GM12878 (cell line): ENCODE measurements at regions of chr3 and their contacts with region 1.

Region 1: DNA sequence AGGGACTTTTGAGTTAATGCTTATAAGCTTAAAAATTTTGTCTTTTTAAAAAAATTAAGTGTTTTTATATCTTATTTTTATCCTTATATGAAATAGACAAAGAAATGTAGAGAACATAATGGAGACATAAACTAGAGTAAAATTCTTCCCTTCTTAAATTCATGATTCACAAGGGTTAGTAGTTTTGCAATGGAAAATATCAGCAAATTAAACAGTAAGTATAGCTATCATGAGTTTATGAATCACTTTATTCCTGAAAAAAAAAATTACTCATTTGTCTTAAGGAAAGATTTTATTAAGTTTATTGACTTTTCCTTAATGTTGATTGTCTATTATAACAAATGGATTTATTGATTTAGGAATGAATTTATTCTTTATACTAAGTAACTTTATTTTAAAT is 4.3 kb downstream of the ATP6V1A start:
- DNase-seq: no peak
- ATAC-seq: no peak
- H3K4me3 ChIP-seq: no peak overlapping the region
- H3K27ac ChIP-seq: no peak overlapping the region
- H3K4me1 ChIP-seq: peaks cover 10% of the 10 kb centered on the region; the same call in 1 of the 2 replicates
- H3K27me3 ChIP-seq: no peaks in the 10 kb centered on the region
- CTCF ChIP-seq: no peak
- EP300 ChIP-seq: no peak
- POLR2A ChIP-seq: no peak
- RAD21 ChIP-seq: no peak

Region 2: DNA sequence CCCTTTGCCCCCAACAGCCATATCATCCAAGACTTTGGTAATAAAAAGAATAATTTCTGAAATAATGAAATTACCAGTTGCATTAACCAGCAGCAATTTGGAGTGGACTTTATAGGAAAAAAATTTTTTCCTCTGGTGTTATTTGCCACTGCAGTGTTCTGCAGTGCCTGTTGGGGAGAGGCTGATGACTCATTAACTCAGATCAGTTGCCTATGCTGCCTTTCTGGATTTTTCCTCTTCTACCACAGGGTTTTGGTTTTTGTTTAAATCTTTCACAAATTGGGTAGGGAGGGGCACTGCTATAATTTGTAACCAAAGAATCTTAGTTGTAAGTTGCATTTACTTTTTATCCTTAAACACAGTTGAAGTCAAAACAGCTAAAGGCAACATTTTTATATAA is 18.4 kb after region 1 on chr3:
- CTCF ChIA-PET with region 1: interaction called, 10 read pairs
- POLR2A ChIA-PET with region 1: interaction called, 4 read pairs
- RAD21 ChIA-PET with region 1: interaction called, 5 read pairs
- SMC1A ChIA-PET with region 1: interaction called, 8 read pairs
- in situ Hi-C with region 1: no loop called
- intact Hi-C with region 1: no loop called
- DNase-seq: no peak
- ATAC-seq: peak; percentile 74
- H3K4me3 ChIP-seq: no peak overlapping the region
- H3K27ac ChIP-seq: no peak overlapping the region
- H3K4me1 ChIP-seq: no peaks in the 10 kb centered on the region
- H3K27me3 ChIP-seq: no peaks in the 10 kb centered on the region
- CTCF ChIP-seq: no peak
- EP300 ChIP-seq: no peak
- POLR2A ChIP-seq: no peak
- RAD21 ChIP-seq: no peak

Region 3: GRCh38 chr3:113838631-113839209 is 87.6 kb after region 1 on chr3 and contains the start of gene GRAMD1C:
- CTCF ChIA-PET with region 1: interaction called, 17 read pairs
- POLR2A ChIA-PET with region 1: interaction called, 12 read pairs
- RAD21 ChIA-PET with region 1: interaction called, 9 read pairs
- SMC1A ChIA-PET with region 1: interaction called, 6 read pairs
- in situ Hi-C with region 1: no loop called
- intact Hi-C with region 1: loop called (anchors 2 kb)
- DNase-seq: peak; percentile 59
- ATAC-seq: peak; percentile 98
- H3K4me3 ChIP-seq: peak within 1 kb of the TSS; percentile 54
- H3K27ac ChIP-seq: no peak within 1 kb of the TSS
- H3K4me1 ChIP-seq: peaks cover 3% of the 10 kb centered on the region; the same call in 1 of the 2 replicates
- H3K27me3 ChIP-seq: no peaks in the 10 kb centered on the region
- CTCF ChIP-seq: peak; percentile 86 to 89 (median 88)
- EP300 ChIP-seq: no peak
- POLR2A ChIP-seq: peak; percentile 40; the same call in 1 of the 2 replicates
- RAD21 ChIP-seq: peak; percentile 75
- polyA plus RNA-seq, gene GRAMD1C: 3.2 to 8.4 TPM

Region 4: DNA sequence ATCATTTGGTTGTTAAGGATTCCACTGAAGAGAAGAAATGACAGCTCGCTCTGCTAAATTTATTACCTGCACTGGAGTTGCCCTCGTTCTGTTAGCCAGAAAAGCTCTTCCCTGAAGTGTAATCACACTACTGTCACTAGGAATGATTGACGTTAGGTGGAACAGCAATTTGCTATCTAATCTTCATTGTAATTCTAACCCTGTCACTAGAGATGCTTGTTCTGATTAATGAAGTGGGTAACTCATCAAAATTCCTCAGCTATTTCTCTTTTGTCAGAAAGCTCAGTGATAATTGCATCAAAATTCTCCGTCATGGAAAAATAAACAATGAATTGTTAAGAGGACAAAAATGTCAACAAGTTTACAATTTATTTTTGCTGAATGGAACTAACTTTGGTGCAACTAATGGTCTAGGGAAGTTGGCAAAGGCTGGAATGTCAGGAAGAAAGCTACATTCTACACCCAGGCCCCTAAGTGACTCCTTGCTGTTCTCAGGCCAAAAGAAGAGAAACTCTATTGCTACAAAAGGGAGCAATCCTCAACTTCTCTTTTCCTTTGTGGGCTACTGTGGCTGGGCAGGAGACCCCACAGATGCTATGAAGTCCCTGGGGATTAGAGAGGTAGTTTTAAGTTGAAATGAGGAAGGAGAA is 271.1 kb after region 1 on chr3:
- CTCF ChIA-PET with region 1: no interaction called
- POLR2A ChIA-PET with region 1: no interaction called
- RAD21 ChIA-PET with region 1: no interaction called
- SMC1A ChIA-PET with region 1: no interaction called
- in situ Hi-C with region 1: no loop called
- intact Hi-C with region 1: no loop called
- DNase-seq: no peak
- ATAC-seq: no peak
- H3K4me3 ChIP-seq: no peak overlapping the region
- H3K27ac ChIP-seq: no peak overlapping the region
- H3K4me1 ChIP-seq: no peaks in the 10 kb centered on the region
- H3K27me3 ChIP-seq: no peaks in the 10 kb centered on the region
- CTCF ChIP-seq: no peak
- EP300 ChIP-seq: no peak
- POLR2A ChIP-seq: no peak
- RAD21 ChIP-seq: no peak